ENCODE measurements at regions of chr4 and their contacts with region 1.

Region 1: DNA sequence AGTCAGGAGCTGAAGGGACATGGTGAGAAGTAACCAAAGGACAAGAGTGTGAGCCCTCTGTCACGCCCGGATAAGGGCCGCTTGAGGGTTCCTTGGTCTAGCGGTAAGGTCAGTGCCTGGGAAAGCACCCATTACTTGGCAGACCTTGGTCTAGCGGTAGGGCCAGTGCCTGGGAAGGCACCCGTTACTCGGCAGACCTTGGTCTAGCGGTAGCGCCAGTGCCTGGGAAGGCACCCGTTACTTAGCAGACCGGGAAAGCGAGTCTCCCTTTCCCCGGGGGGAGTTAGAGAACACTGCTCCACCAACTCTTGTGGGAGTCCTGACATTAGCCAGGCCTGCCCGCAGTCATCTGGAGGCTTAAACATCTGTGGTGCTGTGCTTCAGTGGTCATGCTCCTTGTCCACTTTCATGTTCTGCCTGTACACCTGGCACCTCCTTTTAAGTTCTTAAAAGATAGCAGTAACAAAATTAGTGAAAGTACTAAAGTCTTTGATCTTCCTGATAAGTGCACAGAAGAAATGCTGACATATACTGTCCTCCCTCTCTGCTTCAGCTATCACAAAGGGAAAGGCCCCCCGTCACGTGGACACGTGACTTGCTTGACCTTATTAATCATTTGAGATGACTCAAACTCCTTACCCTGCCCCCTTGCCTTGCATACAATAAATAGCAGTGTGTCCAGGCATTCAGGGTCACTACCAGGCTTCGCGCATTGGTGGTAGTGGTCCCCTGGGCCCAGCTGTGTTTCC is 9.3 kb upstream of the SEC24B start:
- DNase-seq: no peak
- ATAC-seq: no peak
- H3K4me3 ChIP-seq: no peak overlapping the region
- H3K27ac ChIP-seq: no peak overlapping the region
- H3K4me1 ChIP-seq: peaks cover 0 to 7% (median 0%) of the 10 kb centered on the region in 9 donors
- H3K27me3 ChIP-seq: no peaks in the 10 kb centered on the region
- CTCF ChIP-seq: no peak

Region 2: DNA sequence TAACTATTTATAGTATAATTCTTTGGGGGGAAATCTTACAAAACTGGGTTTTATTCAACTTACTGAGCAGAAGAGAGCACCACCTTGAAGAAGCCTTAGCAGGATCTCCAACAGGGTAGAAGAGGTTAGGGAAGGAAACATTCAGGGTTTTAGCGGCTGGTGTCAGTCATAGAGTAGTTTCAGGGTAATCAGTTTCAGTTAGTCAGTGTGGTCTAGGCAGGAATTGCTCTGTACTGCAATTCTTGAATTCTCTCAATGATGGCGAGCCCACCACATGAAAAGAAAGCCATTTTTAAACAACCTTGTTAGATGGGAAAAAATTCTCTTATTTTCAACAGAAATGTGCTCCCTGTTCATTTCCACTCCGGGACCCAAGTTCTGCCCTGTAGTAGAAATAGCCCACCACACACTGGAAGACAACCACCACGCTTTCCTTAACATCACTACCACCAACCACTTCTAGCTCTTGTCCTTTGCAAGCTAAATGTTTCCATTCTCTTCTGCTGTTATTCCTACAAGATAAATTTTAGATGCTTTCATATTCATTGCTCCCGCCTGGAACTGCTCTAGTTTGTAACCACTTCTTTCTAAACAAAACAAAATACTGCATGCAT is 147.7 kb before region 1 on chr4:
- intact Hi-C with region 1: no loop called
- DNase-seq: no peak
- ATAC-seq: no peak
- H3K4me3 ChIP-seq: no peak overlapping the region
- H3K27ac ChIP-seq: no peak overlapping the region
- H3K4me1 ChIP-seq: peaks cover 0 to 3% (median 0%) of the 10 kb centered on the region in 9 donors
- H3K27me3 ChIP-seq: no peaks in the 10 kb centered on the region
- CTCF ChIP-seq: no peak

Region 3: DNA sequence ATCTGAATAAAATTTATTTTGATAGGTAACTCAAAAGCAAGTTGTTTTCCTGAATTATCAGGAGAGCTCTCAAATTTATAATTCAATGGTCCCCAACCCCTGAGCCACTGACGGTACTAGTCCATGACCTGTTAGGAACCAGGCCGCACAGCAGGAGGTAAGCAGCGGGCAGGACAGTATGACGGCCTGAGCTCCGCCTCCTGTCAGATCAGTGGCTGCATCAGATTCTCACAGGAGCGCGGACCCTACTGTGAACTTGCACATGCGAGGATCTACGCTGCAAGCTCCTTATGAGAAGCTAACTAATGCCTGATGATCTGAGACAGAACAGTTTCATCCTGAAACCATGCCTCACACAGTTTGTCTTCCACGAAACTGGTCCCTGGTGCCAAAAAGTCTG is 28.6 kb before region 1 on chr4:
- intact Hi-C with region 1: no loop called
- DNase-seq: no peak
- ATAC-seq: no peak
- H3K4me3 ChIP-seq: no peak overlapping the region
- H3K27ac ChIP-seq: no peak overlapping the region
- H3K4me1 ChIP-seq: no peaks in the 10 kb centered on the region
- H3K27me3 ChIP-seq: peaks cover 0 to 5% (median 0%) of the 10 kb centered on the region in 7 donors
- CTCF ChIP-seq: no peak

Region 4: DNA sequence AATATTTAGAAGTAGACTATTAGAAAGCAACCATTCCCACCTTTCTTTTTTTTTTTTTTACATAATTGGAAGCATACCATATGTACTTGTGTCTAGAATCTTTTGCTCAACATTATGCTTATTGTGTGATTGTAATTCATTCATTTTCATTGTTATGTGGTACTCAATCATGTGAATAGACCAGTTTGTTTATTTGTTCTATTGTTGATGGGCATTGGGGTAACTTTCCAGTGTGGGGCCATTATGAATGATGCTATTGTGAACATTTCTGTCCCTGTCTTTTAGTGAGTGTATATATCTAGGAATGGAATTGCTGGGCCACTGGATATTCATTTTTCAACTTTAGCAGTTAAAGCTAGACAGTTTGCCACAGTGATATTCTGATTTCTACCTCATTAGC is 73.2 kb after region 1 on chr4:
- intact Hi-C with region 1: no loop called
- DNase-seq: no peak
- ATAC-seq: no peak
- H3K4me3 ChIP-seq: no peak overlapping the region
- H3K27ac ChIP-seq: no peak overlapping the region
- H3K4me1 ChIP-seq: peaks cover 0 to 8% (median 0%) of the 10 kb centered on the region in 9 donors
- H3K27me3 ChIP-seq: no peaks in the 10 kb centered on the region
- CTCF ChIP-seq: no peak

Region 5: DNA sequence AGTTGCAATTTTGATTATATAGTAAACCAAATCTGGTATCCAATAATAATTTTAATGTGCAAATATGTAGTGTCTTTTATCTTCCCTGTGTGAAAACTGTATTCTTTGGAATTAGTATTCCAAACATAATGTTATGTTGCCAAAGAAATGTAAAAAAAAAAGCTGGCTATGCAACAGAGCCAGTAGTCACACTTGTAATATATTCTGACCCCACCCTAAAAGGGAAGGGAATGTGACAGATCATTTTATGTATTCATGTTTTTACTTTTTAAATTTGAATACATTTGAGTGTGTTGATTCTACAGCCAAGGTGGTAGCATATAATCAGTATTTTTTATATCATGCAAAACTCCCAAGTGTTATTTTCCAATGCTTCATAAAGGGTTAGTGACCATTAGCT is 107.9 kb after region 1 on chr4:
- intact Hi-C with region 1: no loop called
- DNase-seq: no peak
- ATAC-seq: no peak
- H3K4me3 ChIP-seq: no peak overlapping the region
- H3K27ac ChIP-seq: no peak overlapping the region
- H3K4me1 ChIP-seq: no peaks in the 10 kb centered on the region
- H3K27me3 ChIP-seq: no peaks in the 10 kb centered on the region
- CTCF ChIP-seq: no peak

Region 6: GRCh38 chr4:109649872-109650271 is 225.6 kb after region 1 on chr4:
- intact Hi-C with region 1: loop called in 7 of 10 experiments (anchors 5 to 10 kb)
- DNase-seq: no peak
- ATAC-seq: no peak
- H3K4me3 ChIP-seq: no peak overlapping the region
- H3K27ac ChIP-seq: peak overlapping the region in 1 of 10 donors; percentile 73
- H3K4me1 ChIP-seq: peaks cover 0 to 24% (median 0%) of the 10 kb centered on the region in 9 donors
- H3K27me3 ChIP-seq: no peaks in the 10 kb centered on the region
- CTCF ChIP-seq: no peak

Region 7: DNA sequence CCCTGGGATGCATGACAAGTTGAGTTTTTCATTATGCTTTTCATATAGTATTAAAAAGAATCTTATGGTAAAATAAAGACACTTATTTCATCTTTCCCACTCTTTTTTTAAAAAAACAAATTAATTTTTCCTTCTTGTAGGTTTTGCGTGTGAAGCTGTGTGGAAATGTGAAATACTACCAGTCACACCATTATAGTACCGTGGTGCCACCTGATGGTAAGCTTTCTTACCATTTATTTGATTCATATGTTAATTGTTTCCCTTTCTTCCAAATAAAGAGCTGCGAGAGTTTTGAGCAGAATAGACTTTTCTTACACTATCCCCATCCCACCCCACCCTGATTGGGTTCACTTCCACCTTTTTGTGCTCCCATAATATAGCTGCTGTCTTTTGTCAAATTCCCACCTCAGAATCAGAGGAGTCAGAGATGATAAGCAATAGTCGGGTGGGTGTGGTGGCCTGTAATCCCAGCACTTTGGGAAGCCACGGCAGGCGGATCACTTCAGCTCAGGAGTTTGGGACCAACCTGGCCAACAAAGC is 234.7 kb after region 1 on chr4:
- intact Hi-C with region 1: loop called in 7 of 10 experiments (anchors 5 to 10 kb)
- DNase-seq: no peak
- ATAC-seq: no peak
- H3K4me3 ChIP-seq: no peak overlapping the region
- H3K27ac ChIP-seq: no peak overlapping the region
- H3K4me1 ChIP-seq: no peaks in the 10 kb centered on the region
- H3K27me3 ChIP-seq: no peaks in the 10 kb centered on the region
- CTCF ChIP-seq: peak in 6 of 9 donors; percentile 12 to 49 (median 26)

Region 8: GRCh38 chr4:109809655-109810054 is 385.4 kb after region 1 on chr4:
- intact Hi-C with region 1: loop called in 1 of 10 experiments (anchors 5 kb)
- DNase-seq: no peak
- ATAC-seq: no peak
- H3K4me3 ChIP-seq: no peak overlapping the region
- H3K27ac ChIP-seq: no peak overlapping the region
- H3K4me1 ChIP-seq: peaks cover 0 to 4% (median 1%) of the 10 kb centered on the region in 9 donors
- H3K27me3 ChIP-seq: no peaks in the 10 kb centered on the region
- CTCF ChIP-seq: no peak

Region 9: GRCh38 chr4:109826719-109827118 is 402.5 kb after region 1 on chr4:
- intact Hi-C with region 1: loop called in 6 of 10 experiments (anchors 1 to 10 kb)
- DNase-seq: no peak
- ATAC-seq: no peak
- H3K4me3 ChIP-seq: no peak overlapping the region
- H3K27ac ChIP-seq: no peak overlapping the region
- H3K4me1 ChIP-seq: no peaks in the 10 kb centered on the region
- H3K27me3 ChIP-seq: no peaks in the 10 kb centered on the region
- CTCF ChIP-seq: peak; percentile 25 to 71 (median 58)

Measured in heart right ventricle (tissue), 16 donors.